HepG2 (cell line): ENCODE measurements at regions of chr11 and their contacts with region 1.

Region 1: GRCh38 chr11:7600205-7600775 is 73.0 kb downstream of the CYB5R2 start:
- DNase-seq: peak; percentile 89
- ATAC-seq: peak; percentile 97
- H3K4me3 ChIP-seq: no peak overlapping the region
- H3K27ac ChIP-seq: peak overlapping the region; percentile 58
- H3K4me1 ChIP-seq: peaks cover 65% of the 10 kb centered on the region
- H3K27me3 ChIP-seq: no peaks in the 10 kb centered on the region
- CTCF ChIP-seq: no peak
- EP300 ChIP-seq: peak; percentile 37 to 80; a peak in 3 of 4 replicates
- POLR2A ChIP-seq: no peak
- RAD21 ChIP-seq: no peak

Region 2: DNA sequence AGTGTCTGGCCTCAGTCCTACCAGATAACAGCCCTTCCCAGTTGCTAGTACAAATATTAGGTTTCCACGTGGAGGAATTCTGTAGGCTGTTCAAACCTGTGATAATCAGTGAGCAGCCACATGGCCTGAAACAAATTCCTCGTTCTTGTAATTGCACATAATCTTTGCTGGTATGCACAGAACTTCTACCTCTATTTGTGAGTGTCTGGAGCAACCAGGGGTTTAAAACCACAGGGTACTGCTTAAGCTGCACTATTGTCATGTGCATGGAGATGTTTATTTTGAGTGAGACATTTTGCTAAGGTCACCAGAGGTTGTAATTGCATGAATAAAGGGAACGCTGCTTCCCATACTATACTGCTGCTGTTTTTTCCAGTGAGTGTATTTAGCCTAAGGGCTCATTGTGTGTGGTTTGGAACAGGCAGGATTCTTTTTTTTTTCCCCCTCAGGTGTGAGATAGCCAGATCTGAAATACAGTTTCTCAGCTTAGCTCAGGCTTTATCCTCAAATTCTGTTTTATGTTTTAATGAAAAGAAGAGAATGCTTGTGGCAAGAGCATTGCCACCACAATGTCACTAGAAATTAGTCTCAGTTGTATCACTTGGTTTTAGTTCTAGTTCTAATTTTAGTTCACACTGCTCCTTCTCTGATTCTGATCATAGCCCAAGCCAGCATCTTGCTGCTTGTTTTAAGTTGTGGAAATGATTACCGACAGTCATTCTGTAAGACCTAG is 12.5 kb after region 1 on chr11:
- CTCF ChIA-PET with region 1: no interaction called
- POLR2A ChIA-PET with region 1: interaction called, 22 read pairs
- in situ Hi-C with region 1: no loop called
- intact Hi-C with region 1: no loop called
- DNase-seq: peak; percentile 88
- ATAC-seq: peak; percentile 91
- H3K4me3 ChIP-seq: no peak overlapping the region
- H3K27ac ChIP-seq: peak overlapping the region; percentile 52
- H3K4me1 ChIP-seq: peaks cover 38% of the 10 kb centered on the region
- H3K27me3 ChIP-seq: no peaks in the 10 kb centered on the region
- CTCF ChIP-seq: no peak
- EP300 ChIP-seq: 0 out of 4 replicates have a peak, but pooled peaks of 1 of the 2 experiments have one; percentile 14
- POLR2A ChIP-seq: no peak
- RAD21 ChIP-seq: no peak

Region 3: DNA sequence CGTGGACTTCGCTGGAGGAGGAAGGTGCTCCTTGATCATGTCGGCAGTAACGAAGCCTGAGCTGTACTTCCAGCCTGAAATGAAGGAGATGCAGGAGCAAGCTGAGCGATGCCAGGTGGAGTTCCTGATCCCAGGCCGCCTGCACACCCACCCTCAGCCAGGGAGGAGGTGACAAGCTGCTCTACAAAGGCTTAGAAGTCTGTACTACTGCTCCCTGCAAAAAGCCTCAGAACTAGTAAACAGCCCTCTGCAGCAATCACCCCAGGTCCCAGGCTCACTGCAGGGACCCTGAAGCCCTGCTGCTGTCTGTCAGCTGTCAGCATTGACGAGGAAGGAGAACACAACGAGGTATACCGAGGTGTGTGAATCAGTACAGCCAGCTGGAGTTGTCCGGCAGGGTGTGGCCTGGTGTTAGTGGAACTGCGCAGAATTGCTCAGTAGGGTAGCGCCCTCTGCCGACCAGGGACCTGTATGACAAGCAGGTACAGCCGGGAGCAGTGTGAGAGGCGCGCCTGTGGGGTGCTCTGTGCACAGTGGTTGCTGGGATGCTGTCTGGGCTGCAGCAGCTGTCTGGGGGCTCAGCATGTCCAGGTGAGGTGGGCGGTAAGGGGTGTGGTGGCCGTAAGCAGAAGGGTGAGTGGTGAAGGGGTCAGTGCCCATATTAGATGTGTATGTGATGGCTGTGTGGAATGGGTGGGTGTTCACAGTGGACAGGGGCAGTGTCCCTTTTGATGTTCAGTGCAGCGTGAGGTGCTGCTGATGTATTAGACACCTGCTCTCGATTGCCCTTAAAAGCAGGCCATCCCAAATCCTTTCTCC is 65.4 kb after region 1 on chr11:
- CTCF ChIA-PET with region 1: no interaction called
- POLR2A ChIA-PET with region 1: no interaction called
- in situ Hi-C with region 1: no loop called
- intact Hi-C with region 1: no loop called
- DNase-seq: peak; percentile 65
- ATAC-seq: peak; percentile 98
- H3K4me3 ChIP-seq: no peak overlapping the region
- H3K27ac ChIP-seq: no peak overlapping the region
- H3K4me1 ChIP-seq: 0 out of 2 replicates have a peak, but pooled peaks cover 8% of the 10 kb centered on the region
- H3K27me3 ChIP-seq: no peaks in the 10 kb centered on the region
- CTCF ChIP-seq: peak; percentile 98
- EP300 ChIP-seq: no peak
- POLR2A ChIP-seq: no peak
- RAD21 ChIP-seq: peak; percentile 93